Activated T-helper 2 cell treated with anti-CD3 and anti-CD28 coated beads, Interferon-gamma antibody, Interleukin-2, Interleukin-4, amounts not matched to agents 10 μg/mL and 5 μg/mL and 100 μg/mL, durations not matched to agents 14 hours and 24 hours and 36 hours (primary cell): ENCODE measurements at regions of chr17 and their contacts with region 1.

Region 1: DNA sequence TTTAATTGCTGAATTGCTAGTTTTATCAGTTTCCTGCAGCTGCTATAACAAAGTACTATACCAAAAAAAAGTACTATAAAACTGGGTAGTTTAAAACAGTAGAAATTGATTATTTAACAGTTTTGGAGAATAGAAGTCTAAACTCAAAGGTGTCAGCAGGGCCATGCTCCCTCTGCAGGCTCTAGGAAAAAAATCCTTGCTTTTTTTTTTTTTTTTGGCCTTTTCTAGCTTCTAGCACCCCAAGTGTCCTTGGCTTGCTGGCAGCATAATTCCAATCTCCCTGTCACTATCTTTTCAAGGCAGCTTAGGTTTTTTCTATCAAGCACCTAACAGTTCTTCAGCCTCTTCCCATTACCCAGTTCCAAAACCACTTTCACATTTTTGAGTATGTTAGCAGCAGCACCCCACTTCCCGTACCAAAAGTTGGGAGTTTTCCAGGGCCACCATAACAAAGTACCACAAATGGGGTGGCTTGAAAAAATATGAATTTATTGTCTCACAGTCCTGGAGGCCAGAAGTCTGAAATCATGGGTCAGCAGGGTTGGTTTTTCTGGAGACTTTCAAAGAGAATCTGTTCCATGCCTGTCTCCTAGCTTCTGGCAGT is 37.4 kb downstream of the BPTF start:
- DNase-seq: no peak
- H3K4me3 Mint-ChIP-seq: no peak overlapping the region
- H3K27ac Mint-ChIP-seq: peak overlapping the region; percentile 76
- H3K4me1 Mint-ChIP-seq: peaks cover 47% of the 10 kb centered on the region
- H3K27me3 Mint-ChIP-seq: no peaks in the 10 kb centered on the region

Region 2: GRCh38 chr17:67833946-67834631 is 28.6 kb before region 1 on chr17:
- intact Hi-C with region 1: loop called (anchors 2 kb)
- DNase-seq: no peak
- H3K4me3 Mint-ChIP-seq: no peak overlapping the region
- H3K27ac Mint-ChIP-seq: no peak overlapping the region
- H3K4me1 Mint-ChIP-seq: peaks cover 47% of the 10 kb centered on the region
- H3K27me3 Mint-ChIP-seq: no peaks in the 10 kb centered on the region